ENCODE measurements at regions of chr11 and their contacts with region 1.

Region 1: DNA sequence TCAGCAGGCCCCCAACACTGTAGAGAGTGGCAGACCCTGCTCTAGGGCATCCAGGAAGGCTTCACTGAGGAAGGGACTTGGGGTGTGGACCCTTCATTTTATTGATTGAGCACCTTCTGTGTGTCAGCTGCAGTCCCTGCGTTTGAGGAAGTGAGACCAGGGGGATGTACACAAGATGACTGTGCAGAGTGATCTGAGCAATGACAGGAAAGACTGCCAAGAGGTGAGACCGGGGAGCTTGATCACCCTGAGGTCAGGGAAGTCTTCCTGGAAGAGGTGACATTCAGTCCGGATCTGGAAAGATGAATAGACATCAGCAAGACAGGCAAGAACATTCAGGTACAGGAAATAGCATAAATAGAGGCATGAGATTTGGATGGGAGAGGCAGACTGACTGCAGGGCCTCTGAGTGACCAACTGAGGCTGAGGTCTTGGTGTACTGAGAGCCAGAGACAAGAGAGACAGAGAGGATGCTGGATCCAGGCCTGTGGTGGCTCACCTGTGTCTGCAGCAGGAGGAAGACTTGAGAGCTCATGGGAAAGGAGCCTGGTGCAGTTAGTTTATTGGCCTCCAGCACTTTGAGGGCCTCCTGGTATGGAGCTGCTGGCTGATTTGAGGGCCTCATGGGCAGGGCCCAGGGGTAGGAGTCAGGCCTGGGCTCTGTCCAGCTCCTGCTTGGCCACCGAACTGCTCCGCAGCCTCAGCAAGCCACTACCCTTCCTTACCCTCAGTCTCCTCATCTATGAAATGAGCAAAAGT is 5.2 kb downstream of the DGAT2 start:
- DNase-seq: peak; percentile 84
- ATAC-seq: peak; percentile 76
- H3K4me3 ChIP-seq: peak overlapping the region in 1 of 5 experiments; percentile 37
- H3K4me3 Mint-ChIP-seq: peak overlapping the region; percentile 33
- H3K27ac ChIP-seq: peak overlapping the region; percentile 77 to 84
- H3K27ac Mint-ChIP-seq: peak overlapping the region; percentile 73
- H3K4me1 ChIP-seq: peaks cover 45 to 70% of the 10 kb centered on the region in 2 donors
- H3K4me1 Mint-ChIP-seq: peaks cover 77% of the 10 kb centered on the region
- H3K27me3 ChIP-seq: no peaks in the 10 kb centered on the region
- H3K27me3 Mint-ChIP-seq: no peaks in the 10 kb centered on the region
- CTCF ChIP-seq: no peak

Region 2: DNA sequence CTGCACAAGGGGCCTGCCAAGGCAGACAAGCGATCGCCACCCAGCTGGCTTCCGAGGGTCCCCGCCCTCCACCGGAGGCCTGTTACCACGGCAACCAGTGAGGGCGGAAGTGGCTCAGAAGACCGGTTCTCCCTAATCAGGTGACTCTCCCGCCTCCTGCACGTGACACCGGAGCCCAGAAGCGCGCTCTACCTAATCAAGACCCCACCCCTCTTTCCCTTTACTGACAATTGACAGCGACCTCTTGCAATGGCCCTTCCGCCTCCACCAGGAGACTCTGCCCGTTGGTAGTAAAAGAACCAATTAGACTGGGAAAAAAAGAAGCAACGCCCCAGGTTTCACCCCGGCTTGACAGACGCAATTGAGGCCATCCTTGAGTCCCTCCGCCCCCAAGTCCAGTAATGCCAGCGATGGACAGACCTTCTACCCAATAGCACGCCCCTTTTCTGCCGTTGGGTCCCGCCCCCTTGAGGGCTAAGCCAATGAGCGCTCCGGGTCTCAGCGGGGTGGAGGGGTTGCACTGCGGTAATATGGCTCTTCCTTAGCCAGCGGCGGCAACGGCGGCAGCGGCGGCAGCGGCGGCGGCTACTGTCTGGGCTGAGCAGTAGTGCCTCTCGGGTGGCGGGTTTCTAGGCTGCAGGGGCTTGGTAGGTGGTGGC is 41.0 kb after region 1 on chr11 and contains the start of gene UVRAG:
- CTCF ChIA-PET with region 1: no interaction called
- POLR2A ChIA-PET with region 1: interaction called, 4 read pairs
- intact Hi-C with region 1: loop called (anchors 1 kb)
- DNase-seq: peak; percentile 100
- ATAC-seq: peak; percentile 84
- H3K4me3 ChIP-seq: peak within 1 kb of the TSS; percentile 80 to 98 (median 95)
- H3K4me3 Mint-ChIP-seq: no peak within 1 kb of the TSS
- H3K27ac ChIP-seq: peak within 1 kb of the TSS; percentile 93 to 97
- H3K27ac Mint-ChIP-seq: peak within 1 kb of the TSS; percentile 99
- H3K4me1 ChIP-seq: peaks cover 37 to 63% of the 10 kb centered on the region in 2 donors
- H3K4me1 Mint-ChIP-seq: peaks cover 48% of the 10 kb centered on the region
- H3K27me3 ChIP-seq: no peaks in the 10 kb centered on the region
- H3K27me3 Mint-ChIP-seq: no peaks in the 10 kb centered on the region
- CTCF ChIP-seq: no peak
- total RNA-seq, gene UVRAG: 94.1 and 115 TPM in 2 replicates

Measured in B cell (primary cell).